Activated CD4-positive, alpha-beta memory T cell treated with anti-CD3 and anti-CD28 coated beads for 36 hours (primary cell): ENCODE measurements at regions of chr19 and their contacts with region 1.

Region 1: DNA sequence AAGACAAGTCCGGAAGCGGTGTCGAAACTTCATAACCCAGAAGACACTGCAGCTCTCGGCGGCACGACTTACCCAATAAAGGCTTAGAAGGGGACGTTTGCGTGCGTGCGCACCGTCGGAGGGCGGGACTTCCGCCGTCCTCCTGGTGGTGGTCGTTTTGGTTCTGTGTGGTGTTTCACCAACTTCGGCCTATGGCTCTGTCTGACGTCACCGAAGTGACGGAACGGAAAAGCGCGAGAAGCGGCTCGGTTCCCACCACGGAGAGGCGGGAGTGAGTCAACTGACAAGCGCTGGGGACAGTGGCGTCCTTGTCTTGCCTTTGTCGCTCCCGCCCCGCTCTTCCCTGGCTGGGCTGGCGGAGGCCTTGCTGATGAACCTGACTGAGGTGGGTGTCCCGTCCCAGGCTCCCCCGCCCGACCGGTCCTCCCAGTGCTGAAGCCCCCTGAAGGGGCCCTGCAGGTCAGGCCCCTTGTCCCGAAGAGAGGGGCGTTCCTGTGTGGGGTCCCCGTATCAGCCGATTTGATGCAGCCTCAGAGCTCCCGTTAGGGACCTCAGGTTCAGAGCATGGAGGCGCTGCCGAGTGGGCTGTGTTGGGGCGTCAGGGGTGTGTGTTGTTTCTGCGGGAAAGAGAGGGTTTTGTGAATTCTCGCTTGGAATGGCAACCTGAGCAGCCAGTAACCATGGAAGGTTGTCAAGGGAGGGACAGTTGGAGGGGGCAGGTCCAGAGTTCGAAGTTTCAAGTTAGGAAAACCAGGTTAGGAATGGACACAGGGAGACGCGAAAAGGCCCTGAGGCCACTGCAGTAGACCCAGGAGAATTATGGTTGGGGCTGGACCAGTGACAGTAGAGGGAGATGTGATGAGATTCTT is at the start of gene ZNF548:
- DNase-seq: peak; percentile 97
- H3K4me3 Mint-ChIP-seq: peak within 1 kb of the TSS; percentile 96
- H3K27ac Mint-ChIP-seq: peak within 1 kb of the TSS; percentile 94
- H3K4me1 Mint-ChIP-seq: peaks cover 25% of the 10 kb centered on the region
- H3K27me3 Mint-ChIP-seq: no peaks in the 10 kb centered on the region
- total RNA-seq, gene ZNF548: 12.0 to 12.1 TPM

Region 2: GRCh38 chr19:57118848-57119247 is 271.1 kb before region 1 on chr19:
- CTCF ChIA-PET with region 1: no interaction called
- POLR2A ChIA-PET with region 1: no interaction called
- intact Hi-C with region 1: no loop called
- DNase-seq: no peak
- H3K4me3 Mint-ChIP-seq: no peak overlapping the region
- H3K27ac Mint-ChIP-seq: no peak overlapping the region
- H3K4me1 Mint-ChIP-seq: no peaks in the 10 kb centered on the region
- H3K27me3 Mint-ChIP-seq: no peaks in the 10 kb centered on the region

Region 3: GRCh38 chr19:57240311-57241090 is 149.5 kb before region 1 on chr19 and contains the start of gene ZNF805:
- CTCF ChIA-PET with region 1: no interaction called
- POLR2A ChIA-PET with region 1: no interaction called
- intact Hi-C with region 1: loop called (anchors 1 kb)
- DNase-seq: peak; percentile 97
- H3K4me3 Mint-ChIP-seq: peak within 1 kb of the TSS; percentile 90
- H3K27ac Mint-ChIP-seq: peak within 1 kb of the TSS; percentile 89
- H3K4me1 Mint-ChIP-seq: peaks cover 24% of the 10 kb centered on the region
- H3K27me3 Mint-ChIP-seq: no peaks in the 10 kb centered on the region
- total RNA-seq, gene ZNF805: 6.9 to 7.0 TPM

Region 4: DNA sequence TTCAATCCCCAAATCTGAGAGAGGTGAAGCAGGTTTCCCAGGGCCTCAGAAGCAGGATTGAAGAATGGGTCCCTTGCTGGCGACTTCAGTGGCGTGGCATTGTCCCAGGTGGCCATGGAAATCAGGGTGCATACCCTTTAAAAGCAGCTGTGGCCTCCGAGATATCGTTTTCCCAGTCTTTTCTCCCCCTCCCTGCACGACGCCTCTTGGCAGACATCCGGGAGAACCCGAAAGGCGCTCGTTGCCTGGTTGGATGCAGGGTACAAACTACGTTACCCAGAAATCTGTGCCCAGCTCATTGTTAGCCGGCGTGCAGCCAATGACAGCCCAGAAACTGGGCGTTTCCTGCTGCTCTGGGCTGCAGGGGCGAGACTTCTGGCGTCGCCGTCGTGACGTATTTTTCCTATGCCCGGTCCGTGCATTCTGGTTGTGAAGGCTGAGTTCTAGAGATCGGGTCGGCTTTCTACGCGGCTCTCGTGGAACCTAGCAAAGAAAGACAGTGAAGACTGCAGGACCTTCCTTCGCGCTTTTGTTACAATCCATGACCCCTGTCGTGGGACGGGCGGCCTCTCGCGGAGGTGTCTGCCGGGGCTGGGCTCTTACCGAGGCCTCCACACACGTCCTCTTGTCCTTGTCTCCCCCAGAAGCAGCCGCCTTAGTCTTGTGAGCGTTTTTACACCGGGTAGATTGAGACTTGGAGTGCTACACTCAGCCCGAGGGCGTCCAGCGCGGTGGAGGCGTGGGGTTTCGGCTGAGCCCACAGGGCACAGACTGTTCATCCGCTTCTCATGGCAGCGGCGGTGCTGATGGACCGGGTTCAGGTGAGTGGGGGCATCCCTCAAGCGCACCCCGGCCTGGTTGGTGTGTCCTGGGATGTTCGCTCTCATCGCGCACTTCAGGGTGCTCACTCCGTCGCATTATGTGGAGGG is 38.8 kb before region 1 on chr19 and contains the start of gene ZNF304:
- CTCF ChIA-PET with region 1: no interaction called
- POLR2A ChIA-PET with region 1: no interaction called
- intact Hi-C with region 1: loop called (anchors 1 kb)
- DNase-seq: peak; percentile 91
- H3K4me3 Mint-ChIP-seq: peak within 1 kb of the TSS; percentile 90
- H3K27ac Mint-ChIP-seq: peak within 1 kb of the TSS; percentile 68
- H3K4me1 Mint-ChIP-seq: peaks cover 25% of the 10 kb centered on the region
- H3K27me3 Mint-ChIP-seq: peaks cover 5% of the 10 kb centered on the region
- total RNA-seq, gene ZNF304: 3.8 to 4.0 TPM

Region 5: DNA sequence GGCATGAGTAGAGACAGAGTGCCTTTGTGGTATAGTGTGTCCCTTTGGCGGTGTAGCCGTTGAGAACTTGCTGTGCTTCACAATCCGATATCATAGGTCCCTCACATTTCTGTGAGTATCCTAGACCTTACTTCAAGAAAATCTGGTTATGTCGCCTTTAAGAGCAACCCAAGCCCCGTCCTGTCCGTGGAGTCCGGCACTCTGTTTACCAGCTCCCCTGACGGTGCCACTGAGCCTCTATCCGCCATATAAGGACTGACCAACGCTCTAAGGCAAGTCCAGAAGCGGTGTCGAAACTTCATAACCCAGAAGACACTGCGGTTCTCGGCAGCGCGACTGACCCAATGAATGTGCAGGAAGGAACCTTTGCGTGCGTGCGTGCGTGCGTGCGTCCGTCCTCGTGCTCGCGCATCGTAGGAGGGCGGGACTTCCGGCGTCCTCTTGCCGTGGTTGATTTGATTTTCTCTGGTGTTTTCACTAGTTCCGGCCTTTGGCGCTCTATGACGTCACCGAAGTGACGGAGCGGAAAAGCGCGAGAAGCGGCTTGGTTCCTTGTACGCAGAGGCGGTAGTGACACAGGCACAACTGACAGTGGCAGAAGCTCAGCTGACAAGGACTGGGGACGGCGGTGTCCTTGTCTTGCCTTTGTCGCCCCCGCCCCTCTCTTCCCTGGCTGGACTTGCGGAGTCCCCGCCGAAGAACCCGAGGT is 26.8 kb before region 1 on chr19 and contains the starts of genes TRAPPC2B and ZNF547:
- CTCF ChIA-PET with region 1: interaction called, 3 read pairs
- POLR2A ChIA-PET with region 1: no interaction called
- intact Hi-C with region 1: loop called (anchors 1 kb)
- DNase-seq: peak; percentile 99
- H3K4me3 Mint-ChIP-seq: peak within 1 kb of the TSS; percentile 85
- H3K27ac Mint-ChIP-seq: peak within 1 kb of the TSS; percentile 92
- H3K4me1 Mint-ChIP-seq: peaks cover 14% of the 10 kb centered on the region
- H3K27me3 Mint-ChIP-seq: no peaks in the 10 kb centered on the region
- total RNA-seq, gene TRAPPC2B: 3.3 to 3.9 TPM
- total RNA-seq, gene ZNF547: 1.0 to 1.4 TPM

Region 6: DNA sequence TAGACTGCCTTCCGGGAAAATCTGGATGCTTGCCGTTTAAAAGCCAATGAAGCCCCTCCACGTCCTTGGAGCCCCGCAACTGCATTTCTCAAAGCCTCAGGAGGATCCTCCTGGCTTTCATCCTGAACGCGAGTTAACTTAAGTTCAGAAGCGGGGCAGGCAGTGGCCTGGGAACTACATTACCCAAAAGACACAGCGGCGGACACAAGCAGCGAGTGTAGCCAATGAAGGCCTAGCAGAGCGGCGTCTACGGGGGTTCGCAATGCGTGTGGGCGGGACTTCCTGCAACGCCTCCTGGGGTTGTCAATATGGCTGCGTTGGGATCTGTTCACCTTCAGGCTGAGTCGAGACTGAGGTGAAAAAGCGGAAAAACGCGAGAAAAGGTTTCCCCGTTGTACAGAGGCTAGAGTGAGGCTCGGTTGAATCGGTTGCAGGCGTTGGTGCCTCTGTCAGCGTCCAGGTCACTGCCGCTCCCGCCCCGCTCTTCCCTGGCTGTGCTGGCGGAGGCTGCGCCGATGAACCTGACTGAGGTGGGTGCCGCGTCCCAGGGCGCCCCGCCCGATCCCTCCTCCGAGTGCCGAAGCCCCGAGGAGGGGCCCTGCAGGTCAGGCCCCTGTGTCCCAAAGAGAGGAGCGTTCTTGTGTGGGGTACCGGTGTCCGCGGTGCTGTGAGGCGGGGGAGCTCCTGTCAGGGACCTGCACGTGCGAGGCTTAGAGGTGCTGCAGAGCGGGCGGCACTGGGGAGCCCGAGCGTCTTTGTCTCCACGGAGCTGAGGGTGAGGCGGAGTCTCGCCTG is 21.1 kb after region 1 on chr19 and contains the start of gene ZNF17:
- CTCF ChIA-PET with region 1: no interaction called
- POLR2A ChIA-PET with region 1: interaction called, 3 read pairs
- intact Hi-C with region 1: loop called (anchors 1 kb)
- DNase-seq: peak; percentile 95
- H3K4me3 Mint-ChIP-seq: peak within 1 kb of the TSS; percentile 92
- H3K27ac Mint-ChIP-seq: peak within 1 kb of the TSS; percentile 66
- H3K4me1 Mint-ChIP-seq: peaks cover 14% of the 10 kb centered on the region
- H3K27me3 Mint-ChIP-seq: no peaks in the 10 kb centered on the region
- total RNA-seq, gene ZNF17: 4.2 to 5.0 TPM

Region 7: GRCh38 chr19:57435062-57435978 is 45.4 kb after region 1 on chr19 and contains the start of gene ZNF749:
- CTCF ChIA-PET with region 1: no interaction called
- POLR2A ChIA-PET with region 1: no interaction called
- intact Hi-C with region 1: loop called (anchors 1 kb)
- DNase-seq: peak; percentile 97
- H3K4me3 Mint-ChIP-seq: peak within 1 kb of the TSS; percentile 93
- H3K27ac Mint-ChIP-seq: peak within 1 kb of the TSS; percentile 85
- H3K4me1 Mint-ChIP-seq: peaks cover 24% of the 10 kb centered on the region
- H3K27me3 Mint-ChIP-seq: no peaks in the 10 kb centered on the region
- total RNA-seq, gene ZNF749: 9.3 to 9.4 TPM

Region 8: GRCh38 chr19:57527136-57527881 is 137.3 kb after region 1 on chr19 and contains the start of gene ZNF549:
- CTCF ChIA-PET with region 1: no interaction called
- POLR2A ChIA-PET with region 1: no interaction called
- intact Hi-C with region 1: no loop called
- DNase-seq: peak; percentile 94
- H3K4me3 Mint-ChIP-seq: peak within 1 kb of the TSS; percentile 85
- H3K27ac Mint-ChIP-seq: peak within 1 kb of the TSS; percentile 54
- H3K4me1 Mint-ChIP-seq: peaks cover 18% of the 10 kb centered on the region
- H3K27me3 Mint-ChIP-seq: no peaks in the 10 kb centered on the region
- total RNA-seq, gene ZNF549: 2.9 to 3.4 TPM